ENCODE measurements at regions of chr10 and their contacts with region 1.

Region 1: DNA sequence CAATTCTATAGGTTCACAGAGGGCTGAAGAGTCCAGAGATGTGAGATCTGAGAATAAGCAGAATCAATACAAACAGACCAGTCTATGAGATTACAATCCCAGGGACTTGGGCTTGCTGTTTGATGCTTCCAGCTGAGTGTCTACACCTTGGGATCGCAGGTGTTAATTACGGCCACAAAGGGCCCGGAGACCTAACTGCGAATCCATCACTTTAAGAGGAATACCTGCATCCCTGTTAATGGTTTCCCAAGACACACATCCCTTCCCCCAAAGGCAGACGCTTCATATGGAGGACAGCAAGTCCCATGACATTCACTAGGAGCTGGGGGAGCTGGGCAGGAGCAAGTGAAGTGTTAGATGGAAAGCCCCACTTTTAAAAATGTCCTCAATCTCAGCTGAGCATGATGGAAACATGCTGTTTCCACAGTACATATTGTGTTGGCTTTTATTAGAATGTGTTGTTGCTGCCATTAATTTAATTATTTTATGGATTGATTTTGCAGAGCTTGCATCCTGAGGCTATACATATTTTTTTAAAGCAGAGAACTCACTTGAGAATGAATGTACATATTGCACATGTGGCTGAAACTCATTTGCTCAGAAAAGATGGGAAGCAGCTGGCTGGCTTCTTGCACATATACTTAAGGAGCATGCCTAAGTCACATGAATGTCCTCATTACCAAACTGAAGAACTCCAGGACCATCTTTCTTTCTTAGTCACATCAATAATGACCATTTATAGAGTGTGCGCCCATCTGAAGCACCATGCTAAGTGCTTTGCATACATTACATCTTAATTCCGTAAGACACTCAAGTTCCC is 151.3 kb downstream of the NEBL start:
- DNase-seq: no peak
- ATAC-seq: no peak
- H3K4me3 ChIP-seq: no peak overlapping the region
- H3K27ac ChIP-seq: peak overlapping the region; percentile 24 to 71
- H3K4me1 ChIP-seq: peaks cover 3 to 17% of the 10 kb centered on the region in 2 donors
- H3K27me3 ChIP-seq: no peaks in the 10 kb centered on the region

Region 2: DNA sequence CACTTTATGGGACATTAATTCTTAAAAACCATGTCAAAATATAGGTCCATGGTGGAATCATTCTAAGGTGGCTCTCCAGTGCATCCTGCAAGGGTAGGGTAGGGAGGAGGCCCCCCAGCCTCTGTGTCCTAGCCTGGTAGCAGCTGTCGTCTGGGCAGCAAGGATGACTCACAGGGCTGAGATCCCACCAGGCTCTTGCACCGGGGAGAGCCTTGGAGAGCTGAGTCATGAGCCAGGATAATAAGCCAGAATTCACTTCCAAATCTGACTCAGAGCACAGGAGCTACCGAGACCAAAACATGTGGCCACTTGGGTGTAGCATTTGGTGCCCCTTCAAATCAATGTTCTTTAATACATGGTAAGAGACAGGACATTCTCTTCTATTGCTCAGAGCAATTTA is 147.2 kb before region 1 on chr10:
- intact Hi-C with region 1: loop called in 1 of 2 experiments (anchors 10 kb)
- DNase-seq: peak; percentile 84 to 87
- ATAC-seq: peak; percentile 92
- H3K4me3 ChIP-seq: no peak overlapping the region
- H3K27ac ChIP-seq: no peak overlapping the region
- H3K4me1 ChIP-seq: peaks cover 5 to 6% of the 10 kb centered on the region in 2 donors
- H3K27me3 ChIP-seq: no peaks in the 10 kb centered on the region

Region 3: GRCh38 chr10:20622531-20623232 is 123.1 kb before region 1 on chr10:
- intact Hi-C with region 1: loop called in 1 of 2 experiments (anchors 10 kb)
- DNase-seq: no peak
- ATAC-seq: no peak
- H3K4me3 ChIP-seq: no peak overlapping the region
- H3K27ac ChIP-seq: peak overlapping the region in 1 of 2 donors; percentile 14
- H3K4me1 ChIP-seq: peaks cover 0 to 2% of the 10 kb centered on the region in 2 donors
- H3K27me3 ChIP-seq: no peaks in the 10 kb centered on the region

Region 4: DNA sequence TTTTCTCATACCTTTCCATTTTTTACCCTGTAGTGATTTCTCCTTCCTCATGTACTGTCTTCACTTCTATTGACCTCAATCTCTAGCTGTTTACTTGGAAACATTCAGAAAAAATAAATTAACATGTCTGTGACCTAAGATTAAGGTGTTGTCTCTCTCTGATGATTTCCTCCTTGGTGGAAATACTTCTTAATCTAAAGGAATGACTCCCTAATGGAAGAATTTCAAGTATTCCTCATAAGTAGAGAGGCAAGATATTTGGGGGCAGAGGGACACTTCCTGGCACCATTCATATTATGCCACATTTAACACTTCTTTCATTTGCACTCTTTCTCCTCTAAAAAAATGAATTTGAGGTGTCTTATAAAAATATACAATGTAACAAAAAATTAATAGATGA is 51.5 kb before region 1 on chr10:
- intact Hi-C with region 1: no loop called
- DNase-seq: no peak
- ATAC-seq: no peak
- H3K4me3 ChIP-seq: no peak overlapping the region
- H3K27ac ChIP-seq: no peak overlapping the region
- H3K4me1 ChIP-seq: no peaks in the 10 kb centered on the region
- H3K27me3 ChIP-seq: no peaks in the 10 kb centered on the region

Measured in aorta (tissue), 5 donors.